ENCODE measurements at regions of chr12 and their contacts with region 1.

Region 1: GRCh38 chr12:114221136-114221833 is 184.7 kb downstream of the TBX5 start:
- DNase-seq: no peak
- H3K4me3 ChIP-seq: no peak overlapping the region
- H3K27ac ChIP-seq: no peak overlapping the region
- H3K4me1 ChIP-seq: no peaks in the 10 kb centered on the region
- H3K27me3 ChIP-seq: no peaks in the 10 kb centered on the region
- CTCF ChIP-seq: no peak

Region 2: GRCh38 chr12:114131824-114132223 is 89.5 kb before region 1 on chr12:
- CTCF ChIA-PET with region 1: no interaction called
- dilution Hi-C with region 1: loop called (anchors 5 kb)
- in situ Hi-C with region 1: no loop called
- intact Hi-C with region 1: no loop called
- DNase-seq: no peak
- H3K4me3 ChIP-seq: no peak overlapping the region
- H3K27ac ChIP-seq: no peak overlapping the region
- H3K4me1 ChIP-seq: no peaks in the 10 kb centered on the region
- H3K27me3 ChIP-seq: no peaks in the 10 kb centered on the region
- CTCF ChIP-seq: no peak

Region 3: GRCh38 chr12:115088328-115088994 is 867.2 kb after region 1 on chr12:
- CTCF ChIA-PET with region 1: no interaction called
- dilution Hi-C with region 1: no loop called
- in situ Hi-C with region 1: no loop called
- intact Hi-C with region 1: no loop called
- DNase-seq: no peak
- H3K4me3 ChIP-seq: no peak overlapping the region
- H3K27ac ChIP-seq: no peak overlapping the region
- H3K4me1 ChIP-seq: no peaks in the 10 kb centered on the region
- H3K27me3 ChIP-seq: no peaks in the 10 kb centered on the region
- CTCF ChIP-seq: no peak

Measured in mammary epithelial cell (primary cell).